HEK293T (cell line): ENCODE measurements at regions of chr1 and their contacts with region 1.

Region 1: GRCh38 chr1:153532769-153533599 is 2.8 kb downstream of the S100A6 start:
- DNase-seq: peak; percentile 72

Region 2: GRCh38 chr1:152954434-152954833 is 578.5 kb before region 1 on chr1:
- CTCF ChIA-PET with region 1: no interaction called
- POLR2A ChIA-PET with region 1: no interaction called
- DNase-seq: no peak

Region 3: GRCh38 chr1:153375511-153375910 is 157.5 kb before region 1 on chr1 and contains the start of gene S100A12:
- CTCF ChIA-PET with region 1: no interaction called
- POLR2A ChIA-PET with region 1: no interaction called
- DNase-seq: no peak

Region 4: GRCh38 chr1:153404768-153405167 is 128.2 kb before region 1 on chr1:
- CTCF ChIA-PET with region 1: no interaction called
- POLR2A ChIA-PET with region 1: no interaction called
- DNase-seq: peak; percentile 76

Region 5: GRCh38 chr1:153520230-153520629 is 12.8 kb before region 1 on chr1:
- CTCF ChIA-PET with region 1: interaction called, 16 read pairs
- POLR2A ChIA-PET with region 1: no interaction called
- DNase-seq: no peak

Region 6: DNA sequence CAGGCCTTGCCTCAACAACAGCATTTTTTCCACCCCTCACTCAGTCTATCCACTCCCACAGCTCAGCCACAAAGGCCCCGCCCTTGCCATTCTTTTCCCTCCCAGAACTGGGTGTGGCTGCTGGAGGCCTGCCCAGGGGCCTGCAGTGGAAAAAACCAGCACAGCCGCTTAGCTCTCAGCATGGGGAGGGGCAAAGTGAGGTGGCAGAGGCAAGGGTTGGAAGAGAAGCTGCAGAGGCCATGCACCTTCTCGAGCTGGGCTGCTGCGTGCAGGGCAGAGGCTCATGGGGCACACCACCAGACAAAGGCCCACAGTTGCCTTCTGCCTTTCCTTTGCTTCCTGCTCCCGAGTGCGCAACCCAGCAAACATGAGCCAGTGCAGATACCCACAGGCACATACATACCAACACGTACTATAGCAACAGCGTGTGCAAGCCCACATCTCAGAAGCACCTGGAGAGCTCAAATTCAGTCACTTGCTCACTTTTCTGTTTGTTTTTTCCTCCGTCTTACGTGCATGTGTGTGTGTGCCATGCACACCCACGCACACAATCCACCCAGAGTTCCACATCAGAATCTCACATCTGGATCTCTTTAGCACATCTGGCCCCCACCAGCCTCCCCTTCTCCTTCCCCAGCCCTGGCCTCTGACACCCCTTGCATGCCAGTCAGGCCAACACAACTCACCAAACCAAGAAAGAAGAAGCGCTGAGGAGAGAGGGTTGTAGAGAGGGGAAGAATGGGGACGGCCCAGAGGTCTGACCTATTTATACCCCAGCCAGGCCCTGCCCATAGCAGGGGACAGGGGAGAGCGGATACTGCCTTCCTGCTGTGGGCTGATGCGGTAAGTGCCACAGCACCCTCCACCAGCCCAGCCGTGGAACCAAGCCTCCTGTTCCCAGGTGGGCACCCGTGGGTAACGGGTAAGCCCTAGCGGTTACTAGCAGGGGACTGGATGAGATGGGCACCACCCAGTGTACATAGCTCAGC is 12.4 kb after region 1 on chr1 and contains the start of gene S100A4:
- CTCF ChIA-PET with region 1: interaction called, 14 read pairs
- POLR2A ChIA-PET with region 1: interaction called, 8 read pairs
- DNase-seq: peak; percentile 89

Region 7: GRCh38 chr1:153566440-153567379 is 33.7 kb after region 1 on chr1:
- CTCF ChIA-PET with region 1: interaction called, 60 read pairs
- POLR2A ChIA-PET with region 1: interaction called, 12 read pairs
- DNase-seq: peak; percentile 62

Region 8: DNA sequence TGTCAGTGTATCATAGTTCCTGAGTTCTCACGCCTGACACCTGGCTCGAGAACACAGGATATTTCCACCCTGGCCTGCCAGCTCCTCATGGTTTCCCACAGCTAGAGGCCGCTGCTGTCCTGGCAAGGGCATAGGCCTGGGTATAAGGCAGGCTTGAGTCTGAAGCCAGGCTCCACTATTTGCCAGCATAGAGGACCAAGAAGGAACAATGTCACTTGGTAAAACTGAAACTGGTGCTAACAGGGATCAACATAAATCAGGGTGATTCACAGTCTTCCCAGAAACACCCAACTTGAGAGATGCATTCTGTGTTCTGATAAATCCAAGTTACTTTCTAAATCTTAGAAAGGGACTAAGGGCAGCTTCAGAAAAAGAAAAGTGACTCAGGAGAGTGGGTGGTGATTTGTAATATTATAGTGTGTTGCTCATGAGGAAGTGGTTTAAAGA is 39.6 kb after region 1 on chr1:
- CTCF ChIA-PET with region 1: interaction called, 60 read pairs
- POLR2A ChIA-PET with region 1: interaction called, 12 read pairs
- DNase-seq: no peak

Region 9: DNA sequence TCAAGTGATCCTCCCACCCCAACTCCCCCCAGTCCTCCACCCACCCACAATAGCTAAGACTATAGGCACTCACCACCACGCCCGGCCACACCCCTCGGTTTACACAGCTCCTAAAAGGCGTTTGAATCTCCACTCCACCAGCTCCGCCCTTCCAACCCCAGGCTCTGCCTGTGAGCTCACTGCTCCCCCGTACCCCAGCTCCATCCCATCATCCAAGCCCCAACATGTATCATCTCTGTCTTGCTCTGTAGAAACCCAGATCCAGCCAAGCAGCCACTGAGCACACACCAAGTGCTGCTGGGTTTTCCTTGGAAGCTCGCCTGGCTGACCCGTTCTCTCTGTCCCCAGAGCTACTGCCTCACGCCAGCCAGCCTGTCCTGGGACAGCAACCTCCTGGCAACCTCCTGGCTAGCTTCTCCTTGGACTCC is 44.7 kb after region 1 on chr1:
- CTCF ChIA-PET with region 1: interaction called, 60 read pairs
- POLR2A ChIA-PET with region 1: no interaction called
- DNase-seq: no peak